ENCODE measurements at regions of chr2 and their contacts with region 1.

Region 1: GRCh38 chr2:200486529-200486928 is 23.3 kb downstream of the KCTD18 start:
- DNase-seq: no peak
- ATAC-seq: no peak
- H3K4me3 ChIP-seq: no peak overlapping the region
- H3K27ac ChIP-seq: no peak overlapping the region
- H3K4me1 ChIP-seq: no peaks in the 10 kb centered on the region
- H3K27me3 ChIP-seq: no peaks in the 10 kb centered on the region
- CTCF ChIP-seq: no peak

Region 2: GRCh38 chr2:199979832-199980628 is 506.5 kb before region 1 on chr2:
- intact Hi-C with region 1: loop called in 1 of 2 experiments (anchors 5 kb)
- DNase-seq: peak; percentile 77 to 84 (median 80)
- ATAC-seq: peak; percentile 89
- H3K4me3 ChIP-seq: no peak overlapping the region
- H3K27ac ChIP-seq: no peak overlapping the region
- H3K4me1 ChIP-seq: peaks cover 0 to 6% of the 10 kb centered on the region in 2 donors
- H3K27me3 ChIP-seq: no peaks in the 10 kb centered on the region
- CTCF ChIP-seq: peak; percentile 72 to 95